Pancreas (tissue), 10 donors: ENCODE measurements at regions of chr6 and their contacts with region 1.

Region 1: GRCh38 chr6:47413752-47414422 is 63.7 kb upstream of the CD2AP start:
- DNase-seq: peak in 2 of 6 donors; percentile 20 to 46
- ATAC-seq: peak; percentile 84 to 96 (median 94)
- H3K4me3 ChIP-seq: peak overlapping the region; percentile 9 to 37 (median 22)
- H3K27ac ChIP-seq: peak overlapping the region in 2 of 4 donors; percentile 78 to 82
- H3K4me1 ChIP-seq: peaks cover 0 to 16% (median 1%) of the 10 kb centered on the region in 3 donors
- H3K27me3 ChIP-seq: no peaks in the 10 kb centered on the region
- CTCF ChIP-seq: peak; percentile 58 to 92 (median 88)

Region 2: GRCh38 chr6:47477497-47478232 is 63.8 kb after region 1 on chr6 and contains the start of gene CD2AP:
- intact Hi-C with region 1: loop called in 1 of 3 experiments (anchors 10 kb)
- DNase-seq: peak; percentile 89 to 94 (median 90)
- ATAC-seq: peak; percentile 83 to 93 (median 92)
- H3K4me3 ChIP-seq: peak within 1 kb of the TSS; percentile 88 to 96 (median 92)
- H3K27ac ChIP-seq: peak within 1 kb of the TSS; percentile 96 to 99 (median 98)
- H3K4me1 ChIP-seq: peaks cover 0 to 22% (median 20%) of the 10 kb centered on the region in 3 donors
- H3K27me3 ChIP-seq: no peaks in the 10 kb centered on the region
- CTCF ChIP-seq: no peak
- total RNA-seq, gene CD2AP: 15.9 to 38.5 (median 19.7) TPM

Region 3: DNA sequence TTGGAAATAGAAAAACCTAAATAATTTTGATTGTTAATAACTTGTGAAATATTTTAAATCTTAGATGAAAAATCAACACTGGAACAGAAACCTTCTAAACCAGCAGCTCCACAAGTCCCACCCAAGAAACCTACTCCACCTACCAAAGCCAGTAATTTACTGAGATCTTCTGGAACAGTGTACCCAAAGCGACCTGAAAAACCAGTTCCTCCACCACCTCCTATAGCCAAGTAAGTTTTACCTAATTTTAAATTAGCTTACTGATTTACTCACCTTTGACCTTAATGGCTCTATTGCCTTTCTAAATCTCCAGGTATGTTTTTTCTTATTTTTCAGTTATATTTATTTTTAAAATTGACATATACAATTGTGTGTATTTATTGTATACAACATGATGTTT is 181.9 kb after region 1 on chr6:
- intact Hi-C with region 1: no loop called
- DNase-seq: peak in 1 of 6 donors; percentile 18
- ATAC-seq: peak in 1 of 4 donors; percentile 68
- H3K4me3 ChIP-seq: no peak overlapping the region
- H3K27ac ChIP-seq: no peak overlapping the region
- H3K4me1 ChIP-seq: peaks cover 0 to 11% (median 3%) of the 10 kb centered on the region in 3 donors
- H3K27me3 ChIP-seq: no peaks in the 10 kb centered on the region
- CTCF ChIP-seq: no peak